ENCODE measurements at regions of chr1 and their contacts with region 1.

Region 1: GRCh38 chr1:22275721-22276395 is 133.0 kb upstream of the WNT4 start:
- DNase-seq: peak; percentile 79
- CTCF ChIP-seq: peak; percentile 75

Region 2: DNA sequence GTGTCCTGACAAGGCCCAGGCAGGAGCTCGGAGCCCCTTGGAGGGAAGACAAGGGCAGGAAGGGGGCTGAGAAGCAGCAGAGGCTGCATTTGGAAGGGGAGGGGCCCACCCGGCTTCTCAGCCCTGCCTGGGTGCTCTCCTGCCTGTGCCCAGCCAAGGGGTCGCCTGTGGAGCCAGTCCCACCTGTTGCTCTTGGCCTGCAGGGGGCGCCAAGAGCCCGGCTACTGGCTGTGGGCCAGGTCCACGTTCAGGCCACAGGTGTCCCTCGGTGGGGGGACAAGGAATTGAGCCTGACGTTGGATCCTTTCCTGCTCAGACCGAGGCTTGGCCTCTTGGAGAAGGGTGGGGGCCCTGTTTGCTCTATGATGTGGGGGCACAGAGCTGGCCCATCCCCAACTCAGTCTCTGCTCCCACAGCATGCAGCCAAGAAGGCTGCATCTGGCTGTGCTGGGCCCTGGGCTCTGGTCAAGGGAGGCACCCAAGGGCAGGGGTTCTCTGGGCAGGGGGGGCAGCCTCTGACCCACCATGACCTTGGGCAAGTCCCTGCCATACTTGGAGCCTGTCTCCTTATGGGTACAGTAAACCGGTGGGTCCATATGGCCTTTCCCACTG is 143.9 kb before region 1 on chr1:
- CTCF ChIA-PET with region 1: interaction called, 49 read pairs
- POLR2A ChIA-PET with region 1: no interaction called
- DNase-seq: peak; percentile 86
- CTCF ChIP-seq: peak; percentile 91

Region 3: DNA sequence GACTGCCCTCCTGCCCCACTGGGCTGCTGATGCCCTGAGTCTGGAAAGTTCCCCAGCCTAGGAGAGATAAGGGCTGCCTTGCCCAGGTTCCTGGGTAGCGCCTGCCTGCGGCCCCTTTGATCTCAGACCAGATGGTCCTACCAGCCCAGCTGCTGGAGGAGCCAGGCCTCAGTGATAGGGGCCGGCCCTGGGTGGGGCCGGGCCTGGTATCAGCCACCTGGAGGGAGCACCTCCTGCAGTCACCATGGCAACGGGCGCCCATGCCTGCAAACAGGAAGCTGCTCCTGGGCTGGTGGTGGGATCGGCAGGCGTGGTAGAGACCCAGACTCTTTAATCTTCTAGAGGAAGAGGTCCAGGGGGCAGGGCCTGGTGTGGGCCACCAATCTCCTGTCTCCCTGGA is 13.3 kb before region 1 on chr1:
- CTCF ChIA-PET with region 1: interaction called, 17 read pairs
- POLR2A ChIA-PET with region 1: no interaction called
- DNase-seq: no peak
- CTCF ChIP-seq: no peak

Region 4: DNA sequence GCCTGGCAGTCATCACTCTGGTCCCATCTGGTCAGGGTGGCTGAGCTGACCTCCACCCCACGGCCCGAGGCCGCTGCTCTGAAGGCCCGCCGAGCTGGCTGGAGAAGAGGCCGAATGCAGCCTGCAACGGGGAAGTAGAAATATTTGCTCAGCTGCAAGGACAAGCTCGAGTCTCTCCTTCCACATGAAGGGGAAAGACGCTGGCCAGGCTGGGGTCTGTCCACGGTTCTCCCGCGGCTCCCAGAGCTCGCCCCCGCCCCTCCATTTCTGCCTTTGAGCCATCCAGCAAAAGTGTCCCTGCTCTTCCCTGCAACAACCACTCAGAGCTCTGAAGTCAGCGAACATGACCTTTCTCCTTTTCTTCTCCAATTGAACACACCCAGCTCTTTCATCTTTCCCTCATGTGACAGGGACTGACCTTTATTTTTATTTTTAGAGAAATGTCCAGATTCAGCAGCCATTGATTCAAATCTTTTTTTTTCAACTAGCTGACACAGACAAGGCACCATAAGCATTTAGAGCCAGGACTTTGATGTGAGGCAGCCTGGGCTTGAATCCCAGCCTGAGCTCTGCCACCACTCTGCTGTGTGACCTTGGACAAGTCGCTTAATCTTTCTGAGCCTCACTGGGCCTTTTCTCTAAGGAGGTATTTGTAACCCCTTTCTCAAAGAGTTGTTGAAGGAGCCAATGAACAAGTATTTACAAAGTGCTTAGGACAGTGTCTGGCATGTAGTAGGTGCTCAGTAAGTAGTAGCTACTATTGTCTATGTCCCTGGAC is 16.3 kb after region 1 on chr1:
- CTCF ChIA-PET with region 1: interaction called, 16 read pairs
- POLR2A ChIA-PET with region 1: no interaction called
- DNase-seq: no peak
- CTCF ChIP-seq: no peak

Measured in GM10248 (cell line).